ENCODE measurements at regions of chr6 and their contacts with region 1.

Region 1: GRCh38 chr6:82247634-82248232 is at the start of gene IBTK:
- DNase-seq: peak; percentile 84 to 97 (median 90)
- ATAC-seq: peak; percentile 87
- H3K4me3 ChIP-seq: peak within 1 kb of the TSS; percentile 67
- H3K4me3 Mint-ChIP-seq: peak within 1 kb of the TSS; percentile 96
- H3K27ac ChIP-seq: peak within 1 kb of the TSS; percentile 59 to 73
- H3K27ac Mint-ChIP-seq: peak within 1 kb of the TSS; percentile 98
- H3K4me1 ChIP-seq: peaks cover 24% of the 10 kb centered on the region
- H3K4me1 Mint-ChIP-seq: peaks cover 51% of the 10 kb centered on the region
- H3K27me3 ChIP-seq: no peaks in the 10 kb centered on the region
- H3K27me3 Mint-ChIP-seq: no peaks in the 10 kb centered on the region
- CTCF ChIP-seq: no peak
- total RNA-seq, gene IBTK: 11.0 to 11.2 TPM

Region 2: DNA sequence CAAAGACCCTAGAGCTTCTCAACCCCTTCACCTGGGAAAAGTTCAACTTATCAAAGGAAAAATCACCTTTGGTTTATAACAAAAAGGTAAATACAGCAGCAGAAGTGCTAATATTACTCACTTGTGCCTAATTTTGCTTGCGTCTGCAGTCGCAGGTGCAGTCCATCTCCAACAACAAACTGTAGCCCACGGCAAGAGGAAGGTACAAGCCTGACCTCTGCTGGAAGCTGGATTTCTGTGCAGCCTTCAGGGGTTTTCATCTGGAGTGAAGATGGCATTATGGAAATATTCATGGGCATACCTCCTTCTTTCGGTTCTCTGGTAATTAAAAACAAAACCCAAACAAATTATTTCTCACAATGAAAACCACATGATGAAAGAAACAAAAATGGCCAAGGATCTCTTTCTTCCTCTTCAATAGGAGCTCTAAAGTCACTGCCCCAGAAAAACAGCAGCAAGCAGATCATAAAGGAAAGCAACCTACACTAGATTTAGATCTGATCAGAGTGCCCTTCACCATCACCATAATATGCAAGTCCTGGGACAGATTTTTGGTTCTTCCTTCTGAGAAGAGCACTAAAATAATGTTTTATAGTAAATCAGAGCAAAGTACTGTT is 810.1 kb after region 1 on chr6:
- CTCF ChIA-PET with region 1: no interaction called
- POLR2A ChIA-PET with region 1: no interaction called
- intact Hi-C with region 1: loop called in 1 of 2 experiments (anchors 5 kb)
- DNase-seq: peak in 5 of 14 experiments; percentile 15 to 49 (median 35)
- ATAC-seq: peak; percentile 57
- H3K4me3 ChIP-seq: no peak overlapping the region
- H3K4me3 Mint-ChIP-seq: no peak overlapping the region
- H3K27ac ChIP-seq: no peak overlapping the region
- H3K27ac Mint-ChIP-seq: no peak overlapping the region
- H3K4me1 ChIP-seq: no peaks in the 10 kb centered on the region
- H3K4me1 Mint-ChIP-seq: peaks cover 12% of the 10 kb centered on the region
- H3K27me3 ChIP-seq: no peaks in the 10 kb centered on the region
- H3K27me3 Mint-ChIP-seq: no peaks in the 10 kb centered on the region
- CTCF ChIP-seq: peak; percentile 43

Region 3: DNA sequence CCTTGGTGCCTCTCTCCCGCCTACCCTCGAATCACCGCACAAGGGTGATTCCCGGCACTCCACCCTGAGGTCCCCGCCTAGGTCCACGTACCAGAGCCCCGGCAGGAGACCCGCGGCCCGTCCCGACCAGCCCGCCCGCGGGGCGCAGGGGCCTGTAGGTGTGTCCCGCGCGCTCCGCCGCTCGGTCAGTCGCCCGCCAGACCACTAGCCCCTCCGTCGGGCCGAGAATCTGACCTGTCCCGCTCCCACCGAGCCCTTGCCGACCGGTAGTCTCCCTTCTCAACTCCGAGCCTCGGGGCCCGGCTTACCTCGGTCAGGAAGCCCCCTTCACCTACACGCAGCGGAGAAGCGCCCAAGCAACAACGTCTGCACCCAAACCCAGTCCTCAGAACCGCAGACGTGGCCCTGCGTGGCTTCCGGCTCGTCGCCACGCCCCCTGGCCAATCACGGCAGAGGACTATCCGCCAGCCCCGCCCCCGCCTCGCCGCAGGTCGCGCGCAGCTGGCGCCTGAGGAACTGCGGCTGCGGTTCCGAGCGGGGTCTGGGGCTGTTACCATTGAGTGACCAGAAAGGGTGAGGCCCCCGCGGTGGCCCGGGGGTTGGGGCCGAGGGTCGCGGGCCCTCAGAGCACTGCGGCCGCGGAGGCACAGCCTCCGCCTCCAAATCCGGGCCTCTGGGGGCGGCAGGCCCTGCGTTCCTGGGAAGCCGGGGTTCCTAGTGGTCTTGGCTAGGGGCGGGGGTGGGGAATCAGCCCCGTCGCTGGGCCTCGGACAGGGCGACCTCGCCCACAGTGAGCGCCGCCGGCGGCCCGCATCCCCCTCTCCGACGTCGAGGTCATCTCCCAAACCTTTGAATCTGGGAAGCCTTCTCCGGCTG is 945.4 kb after region 1 on chr6 and contains the starts of genes PGM3 and RWDD2A:
- CTCF ChIA-PET with region 1: no interaction called
- POLR2A ChIA-PET with region 1: no interaction called
- intact Hi-C with region 1: loop called in 1 of 2 experiments (anchors 5 kb)
- DNase-seq: peak; percentile 81 to 96 (median 89)
- ATAC-seq: peak; percentile 97
- H3K4me3 ChIP-seq: peak within 1 kb of the TSS; percentile 88
- H3K4me3 Mint-ChIP-seq: peak within 1 kb of the TSS; percentile 97
- H3K27ac ChIP-seq: peak within 1 kb of the TSS in 1 of 2 donors; percentile 70
- H3K27ac Mint-ChIP-seq: peak within 1 kb of the TSS; percentile 94
- H3K4me1 ChIP-seq: peaks cover 17% of the 10 kb centered on the region
- H3K4me1 Mint-ChIP-seq: peaks cover 54% of the 10 kb centered on the region
- H3K27me3 ChIP-seq: no peaks in the 10 kb centered on the region
- H3K27me3 Mint-ChIP-seq: no peaks in the 10 kb centered on the region
- CTCF ChIP-seq: no peak
- total RNA-seq, gene PGM3: 22.6 to 25.3 TPM
- total RNA-seq, gene RWDD2A: 2.8 to 3.0 TPM